PC-3 (cell line): ENCODE measurements at regions of chr21 and their contacts with region 1.

Region 1: GRCh38 chr21:39788383-39788782 is 43.4 kb downstream of the IGSF5 start:
- DNase-seq: peak; percentile 89
- ATAC-seq: peak; percentile 100
- H3K4me3 ChIP-seq: 0 out of 2 replicates have a peak overlapping the region, but pooled peaks have one; percentile 29
- H3K27ac ChIP-seq: no peak overlapping the region
- H3K4me1 ChIP-seq: no peaks in the 10 kb centered on the region
- H3K27me3 ChIP-seq: peaks cover 4% of the 10 kb centered on the region
- CTCF ChIP-seq: peak; percentile 94

Region 2: GRCh38 chr21:38196036-38196435 is 1592.3 kb before region 1 on chr21:
- CTCF ChIA-PET with region 1: interaction called, 12 read pairs
- POLR2A ChIA-PET with region 1: no interaction called
- intact Hi-C with region 1: no loop called
- DNase-seq: no peak
- ATAC-seq: no peak
- H3K4me3 ChIP-seq: no peak overlapping the region
- H3K27ac ChIP-seq: no peak overlapping the region
- H3K4me1 ChIP-seq: no peaks in the 10 kb centered on the region
- H3K27me3 ChIP-seq: no peaks in the 10 kb centered on the region
- CTCF ChIP-seq: no peak